ENCODE measurements at regions of chr15 and their contacts with region 1.

Region 1: DNA sequence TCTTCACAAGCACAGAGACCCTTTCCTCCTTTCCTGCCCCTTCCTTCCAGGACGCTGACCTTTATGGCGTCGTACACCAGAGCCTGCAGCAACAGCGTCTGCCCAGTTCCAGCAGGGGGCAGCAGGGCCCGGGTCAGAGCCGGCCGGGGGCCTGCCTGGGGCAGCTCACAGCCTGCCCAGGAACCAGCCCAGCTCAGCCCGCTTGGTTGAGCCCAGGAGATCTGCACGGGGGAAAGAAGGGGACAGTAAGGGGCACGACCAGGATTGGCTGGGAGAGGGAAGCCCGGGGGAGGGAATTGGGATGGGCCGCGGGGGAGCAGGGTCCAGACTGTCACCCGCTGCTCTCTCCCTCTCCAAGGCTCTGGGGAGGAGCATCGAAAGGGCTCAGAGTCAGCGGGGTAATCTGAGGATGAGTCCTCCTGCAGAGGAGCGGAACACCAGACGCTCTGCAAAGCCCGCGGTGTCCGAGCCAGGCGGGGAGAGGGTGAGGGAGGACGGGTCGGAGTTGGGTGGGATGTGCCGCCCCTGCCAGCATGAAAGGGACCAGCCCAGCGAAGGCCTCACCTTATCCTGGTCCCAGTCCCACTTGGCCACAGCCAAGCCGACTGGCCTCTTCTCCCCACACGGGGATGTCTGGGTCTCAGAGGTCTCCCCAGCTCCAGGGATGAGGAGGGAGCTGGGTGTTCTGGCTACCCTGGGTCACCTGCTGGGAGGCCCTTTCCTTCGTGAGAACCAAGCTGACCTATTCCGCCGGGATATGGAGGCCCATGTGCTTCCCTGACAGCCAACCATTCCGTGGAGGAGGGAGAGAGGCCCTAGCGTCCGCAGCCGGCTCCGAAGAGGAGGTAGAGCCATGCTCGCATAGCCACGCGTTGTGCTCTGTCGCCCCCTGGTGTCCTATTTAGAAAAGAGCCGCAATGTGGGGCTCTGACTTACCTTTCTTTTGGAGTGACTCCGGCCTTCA is 7.4 kb upstream of the IGDCC3 start:
- DNase-seq: peak; percentile 87 to 90
- H3K4me3 ChIP-seq: peak overlapping the region; percentile 9 to 14
- H3K27ac ChIP-seq: peak overlapping the region; percentile 79
- H3K4me1 ChIP-seq: no peaks in the 10 kb centered on the region
- H3K27me3 ChIP-seq: no peaks in the 10 kb centered on the region
- CTCF ChIP-seq: peak; percentile 91 to 98 (median 92)
- POLR2A ChIP-seq: no peak

Region 2: GRCh38 chr15:65318870-65319356 is 66.3 kb before region 1 on chr15:
- intact Hi-C with region 1: loop called (anchors 5 kb)
- DNase-seq: peak; percentile 77 to 85
- H3K4me3 ChIP-seq: no peak overlapping the region
- H3K27ac ChIP-seq: no peak overlapping the region
- H3K4me1 ChIP-seq: no peaks in the 10 kb centered on the region
- H3K27me3 ChIP-seq: no peaks in the 10 kb centered on the region
- CTCF ChIP-seq: peak; percentile 87 to 98 (median 96)
- POLR2A ChIP-seq: no peak

Measured in uterus (tissue), 4 donors.